BJ (cell line): ENCODE measurements at regions of chr3 and their contacts with region 1.

Region 1: GRCh38 chr3:195850857-195851543 is 39.3 kb upstream of the MUC4 start:
- DNase-seq: peak; percentile 25
- H3K4me3 ChIP-seq: no peak overlapping the region
- H3K27me3 ChIP-seq: no peaks in the 10 kb centered on the region; the same call in 1 of the 2 replicates
- CTCF ChIP-seq: peak; percentile 100

Region 2: GRCh38 chr3:195828762-195829161 is 22.2 kb before region 1 on chr3:
- CTCF ChIA-PET with region 1: interaction called, 17 read pairs
- POLR2A ChIA-PET with region 1: no interaction called
- DNase-seq: no peak
- H3K4me3 ChIP-seq: no peak overlapping the region
- H3K27me3 ChIP-seq: peaks cover 4% of the 10 kb centered on the region; the same call in 1 of the 2 replicates
- CTCF ChIP-seq: no peak

Region 3: GRCh38 chr3:195839282-195840010 is 11.6 kb before region 1 on chr3:
- CTCF ChIA-PET with region 1: interaction called, 41 read pairs
- POLR2A ChIA-PET with region 1: no interaction called
- DNase-seq: no peak
- H3K4me3 ChIP-seq: no peak overlapping the region
- H3K27me3 ChIP-seq: peaks cover 9% of the 10 kb centered on the region
- CTCF ChIP-seq: no peak

Region 4: GRCh38 chr3:195863121-195864006 is 12.4 kb after region 1 on chr3:
- CTCF ChIA-PET with region 1: interaction called, 67 read pairs
- POLR2A ChIA-PET with region 1: no interaction called
- DNase-seq: no peak
- H3K4me3 ChIP-seq: no peak overlapping the region
- H3K27me3 ChIP-seq: no peaks in the 10 kb centered on the region
- CTCF ChIP-seq: peak; percentile 97

Region 5: DNA sequence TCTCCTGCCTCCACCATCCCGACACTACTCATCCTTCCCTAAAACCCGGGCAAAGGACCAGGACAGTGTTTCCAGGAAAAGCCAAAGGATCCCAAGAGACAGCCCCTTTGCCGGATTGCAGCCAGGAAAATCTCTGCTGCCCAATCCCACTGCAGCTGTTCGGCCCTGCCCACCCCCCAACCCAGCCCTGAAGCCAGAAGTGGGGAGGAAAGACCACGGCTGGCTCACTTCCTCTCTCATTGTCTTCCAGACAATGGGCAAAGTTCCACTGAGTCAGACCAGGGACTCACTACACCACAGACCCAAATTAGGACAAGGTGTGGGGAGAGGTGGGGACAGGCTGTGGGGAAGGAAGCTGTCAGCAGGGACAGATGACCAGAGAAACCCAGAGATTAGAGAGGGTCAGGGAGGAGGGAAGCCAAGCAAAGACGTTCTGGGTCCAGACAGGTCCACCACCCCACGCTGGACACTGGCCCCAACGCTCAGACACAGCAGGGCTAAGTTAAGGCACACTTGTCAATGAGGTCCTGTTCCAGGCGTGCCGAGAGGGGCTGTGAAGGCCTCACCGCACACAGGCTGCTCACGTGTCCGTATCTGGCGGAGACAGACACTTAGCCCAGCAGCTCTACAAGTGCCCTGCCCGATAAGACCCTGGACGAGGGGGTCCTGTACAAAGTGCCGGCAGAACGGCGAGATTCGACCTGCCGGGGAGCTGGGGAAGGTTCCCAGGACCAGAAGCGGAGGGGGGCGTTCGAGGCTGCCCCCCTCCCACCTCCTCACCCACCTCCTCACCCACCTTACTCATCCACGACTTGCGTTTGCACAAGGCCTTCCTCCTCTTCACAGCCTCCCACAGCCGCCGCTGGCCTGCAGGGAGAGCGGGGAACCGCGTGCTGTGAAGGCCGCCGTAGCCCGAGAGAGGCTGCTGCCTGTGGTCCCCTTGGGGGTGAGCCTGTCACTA is 35.5 kb after region 1 on chr3:
- CTCF ChIA-PET with region 1: interaction called, 268 read pairs
- POLR2A ChIA-PET with region 1: no interaction called
- DNase-seq: no peak
- H3K4me3 ChIP-seq: no peak overlapping the region
- H3K27me3 ChIP-seq: no peaks in the 10 kb centered on the region
- CTCF ChIP-seq: no peak

Region 6: GRCh38 chr3:195894780-195895607 is 44.0 kb after region 1 on chr3:
- CTCF ChIA-PET with region 1: interaction called, 268 read pairs
- POLR2A ChIA-PET with region 1: no interaction called
- DNase-seq: no peak
- H3K4me3 ChIP-seq: peak overlapping the region; percentile 72
- H3K27me3 ChIP-seq: no peaks in the 10 kb centered on the region
- CTCF ChIP-seq: peak; percentile 91

Region 7: DNA sequence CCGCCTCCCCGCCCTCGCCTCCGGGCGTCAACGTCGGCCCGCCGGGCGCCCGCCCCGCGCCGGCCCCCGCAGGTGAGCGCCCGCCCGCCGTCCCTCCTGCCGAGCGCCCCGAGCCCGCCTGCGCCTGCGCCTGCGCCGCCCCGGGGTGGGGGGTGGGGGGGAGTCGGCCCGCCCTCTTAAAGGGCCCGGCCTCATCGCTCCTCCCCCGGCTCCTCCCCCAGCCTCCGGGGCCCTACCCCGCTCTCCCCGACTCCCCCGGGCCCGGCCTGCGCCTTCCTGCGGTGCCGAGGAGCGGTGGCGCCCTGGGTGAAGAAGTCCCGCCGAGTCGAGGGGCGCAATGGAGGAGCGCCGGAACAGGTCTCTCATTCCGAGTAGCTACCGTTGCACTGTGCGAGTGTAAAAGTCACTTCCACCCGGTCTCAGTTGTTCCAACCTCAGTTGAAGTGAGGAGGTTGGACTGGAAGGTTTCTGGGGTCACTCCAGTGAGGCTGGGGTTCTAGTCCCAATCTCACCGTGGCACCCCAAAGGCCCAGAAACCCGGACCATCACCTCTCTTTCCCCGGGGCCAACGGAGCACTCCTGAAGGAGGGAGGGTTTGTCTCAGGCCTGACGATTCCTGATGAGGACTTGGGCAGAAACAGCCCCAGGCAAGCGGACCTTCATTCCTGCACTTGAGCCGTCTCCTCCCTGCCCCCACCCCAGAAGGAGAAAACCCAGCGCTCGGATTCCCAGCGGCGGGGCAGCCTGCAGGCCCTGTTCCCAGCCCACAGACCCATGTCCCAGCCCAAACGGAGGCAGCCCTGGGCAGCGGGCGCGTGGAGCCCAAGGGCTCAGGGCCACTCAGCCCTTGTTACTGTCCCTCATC is 58.9 kb after region 1 on chr3:
- CTCF ChIA-PET with region 1: interaction called, 139 read pairs
- POLR2A ChIA-PET with region 1: no interaction called
- DNase-seq: no peak
- H3K4me3 ChIP-seq: peak overlapping the region; percentile 59
- H3K27me3 ChIP-seq: no peaks in the 10 kb centered on the region
- CTCF ChIP-seq: no peak